ENCODE measurements at regions of chr22 and their contacts with region 1.

Region 1: GRCh38 chr22:46576556-46577367 is 39.3 kb upstream of the CELSR1 start:
- DNase-seq: peak in 1 of 2 donors; percentile 26
- ATAC-seq: peak; percentile 47 to 55
- H3K4me3 ChIP-seq: peak overlapping the region; percentile 76 to 89 (median 80)
- H3K27ac ChIP-seq: peak overlapping the region; percentile 77 to 89 (median 81)
- H3K4me1 ChIP-seq: peaks cover 43 to 48% of the 10 kb centered on the region in 2 donors
- H3K27me3 ChIP-seq: no peaks in the 10 kb centered on the region
- CTCF ChIP-seq: no peak
- POLR2A ChIP-seq: peak in 1 of 2 donors; percentile 51

Region 2: GRCh38 chr22:45948081-45948648 is 628.6 kb before region 1 on chr22:
- in situ Hi-C with region 1: no loop called
- intact Hi-C with region 1: no loop called
- DNase-seq: no peak
- ATAC-seq: no peak
- H3K4me3 ChIP-seq: no peak overlapping the region
- H3K27ac ChIP-seq: no peak overlapping the region
- H3K4me1 ChIP-seq: peaks cover 0 to 14% of the 10 kb centered on the region in 2 donors
- H3K27me3 ChIP-seq: peaks cover 9 to 29% (median 21%) of the 10 kb centered on the region in 3 donors
- CTCF ChIP-seq: no peak
- POLR2A ChIP-seq: no peak

Region 3: DNA sequence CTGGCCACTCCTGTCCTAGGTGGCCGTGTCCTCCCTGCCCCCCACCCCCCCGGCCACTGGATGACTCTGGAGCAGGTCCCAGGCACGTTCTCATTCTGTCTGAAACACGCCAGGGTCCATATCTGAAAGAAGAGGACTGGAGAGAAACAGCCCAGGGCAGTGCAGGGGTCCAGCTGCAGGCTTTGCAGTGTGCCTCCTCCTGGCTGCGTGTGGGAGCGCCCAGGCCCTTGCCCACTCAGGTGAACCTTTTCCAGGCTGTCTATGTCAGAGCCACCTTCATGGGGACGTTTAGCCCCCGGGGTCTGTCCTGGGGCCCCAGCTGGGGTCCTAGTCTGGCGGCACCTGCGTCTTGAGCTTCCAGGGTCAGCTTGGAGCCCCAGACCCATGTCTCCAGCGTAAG is 59.0 kb after region 1 on chr22:
- in situ Hi-C with region 1: no loop called
- intact Hi-C with region 1: loop called (anchors 2 kb)
- DNase-seq: no peak
- ATAC-seq: peak; percentile 37 to 40
- H3K4me3 ChIP-seq: peak overlapping the region in 2 of 4 donors; percentile 27 to 31
- H3K27ac ChIP-seq: peak overlapping the region; percentile 79 to 95 (median 90)
- H3K4me1 ChIP-seq: peaks cover 20 to 51% of the 10 kb centered on the region in 2 donors
- H3K27me3 ChIP-seq: no peaks in the 10 kb centered on the region
- CTCF ChIP-seq: no peak
- POLR2A ChIP-seq: no peak

Region 4: DNA sequence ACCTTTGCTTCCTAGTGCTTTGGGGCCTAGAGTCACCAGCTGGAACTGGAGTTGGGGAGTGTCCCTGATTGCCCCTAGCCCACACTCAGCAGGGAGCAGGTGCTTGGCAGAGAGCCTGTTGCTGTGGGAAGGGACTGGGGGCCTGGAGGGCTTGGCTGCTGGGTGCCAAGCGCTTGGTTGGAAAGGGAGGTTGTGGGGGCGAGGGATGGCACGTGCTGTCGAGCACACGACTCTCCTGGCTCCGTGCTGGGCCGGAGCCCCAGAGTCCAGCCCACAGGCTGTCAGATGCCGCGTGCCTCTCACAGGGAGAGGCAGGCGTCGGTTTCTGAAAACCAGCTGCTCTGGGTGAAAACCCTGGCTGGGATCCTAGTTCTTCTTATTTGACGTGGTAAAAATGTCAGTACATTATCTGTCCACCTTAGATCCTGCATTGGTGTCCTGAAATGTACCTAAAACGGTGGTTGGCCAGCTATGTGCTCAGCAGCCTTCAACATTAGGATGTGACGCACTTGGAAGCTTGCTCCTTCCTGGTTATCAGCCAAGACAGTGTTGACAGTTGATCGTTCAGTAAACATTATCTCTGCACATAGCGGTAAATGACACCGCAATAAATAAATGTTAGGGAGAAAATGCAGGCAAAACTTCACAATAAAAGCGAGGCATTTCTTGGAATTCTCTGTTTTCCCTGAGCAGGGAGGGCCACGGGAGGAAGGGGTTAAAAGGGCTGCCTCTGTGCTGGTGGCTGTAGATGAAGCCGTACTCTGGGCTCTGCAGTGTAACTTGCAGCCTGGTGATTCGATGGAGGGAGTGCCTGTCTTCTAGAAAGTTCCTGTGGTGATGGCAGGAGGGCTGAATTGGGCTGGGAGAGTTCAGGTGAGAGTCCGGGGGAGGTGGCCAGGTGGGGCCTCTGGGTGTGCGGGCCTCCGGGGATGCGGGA is 72.6 kb after region 1 on chr22:
- in situ Hi-C with region 1: no loop called
- intact Hi-C with region 1: loop called (anchors 2 kb)
- DNase-seq: peak; percentile 66 to 67
- ATAC-seq: peak; percentile 67 to 75
- H3K4me3 ChIP-seq: peak overlapping the region in 2 of 4 donors; percentile 6 to 29
- H3K27ac ChIP-seq: peak overlapping the region; percentile 88 to 98 (median 88)
- H3K4me1 ChIP-seq: peaks cover 49 to 67% of the 10 kb centered on the region in 2 donors
- H3K27me3 ChIP-seq: no peaks in the 10 kb centered on the region
- CTCF ChIP-seq: no peak
- POLR2A ChIP-seq: peak in 1 of 2 donors; percentile 22

Region 5: DNA sequence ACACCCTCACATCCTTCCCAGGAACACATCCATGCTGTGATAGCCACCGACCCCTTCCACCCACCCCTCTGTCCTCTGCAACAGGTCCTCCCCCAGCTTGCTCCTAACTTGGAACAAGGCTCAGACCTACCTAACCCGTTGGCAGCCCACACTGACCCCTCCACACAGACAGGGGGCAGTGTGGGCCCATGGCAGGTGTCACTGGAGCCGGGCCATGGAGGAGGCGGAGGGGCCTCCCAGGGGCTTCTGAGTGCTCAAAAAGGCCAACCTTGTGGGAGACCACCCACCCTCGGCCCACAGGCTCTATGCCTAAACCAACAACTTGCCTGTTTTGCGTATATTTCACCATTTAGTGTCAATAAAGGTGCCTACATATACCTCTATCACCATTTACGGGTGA is 104.2 kb after region 1 on chr22:
- in situ Hi-C with region 1: loop called in 1 of 4 experiments (anchors 25 kb)
- intact Hi-C with region 1: loop called (anchors 5 kb)
- DNase-seq: no peak
- ATAC-seq: no peak
- H3K4me3 ChIP-seq: no peak overlapping the region
- H3K27ac ChIP-seq: no peak overlapping the region
- H3K4me1 ChIP-seq: peaks cover 17 to 18% of the 10 kb centered on the region in 2 donors
- H3K27me3 ChIP-seq: no peaks in the 10 kb centered on the region
- CTCF ChIP-seq: peak in 1 of 5 experiments; percentile 14
- POLR2A ChIP-seq: no peak

Region 6: GRCh38 chr22:46737976-46738646 is 161.3 kb after region 1 on chr22 and contains the start of gene CERK:
- in situ Hi-C with region 1: no loop called
- intact Hi-C with region 1: loop called (anchors 5 kb)
- DNase-seq: peak; percentile 69 to 70
- ATAC-seq: peak; percentile 67 to 69
- H3K4me3 ChIP-seq: peak within 1 kb of the TSS; percentile 62 to 79 (median 72)
- H3K27ac ChIP-seq: peak within 1 kb of the TSS; percentile 87 to 94 (median 92)
- H3K4me1 ChIP-seq: peaks cover 63 to 66% of the 10 kb centered on the region in 2 donors
- H3K27me3 ChIP-seq: no peaks in the 10 kb centered on the region
- CTCF ChIP-seq: no peak
- POLR2A ChIP-seq: peak; percentile 69 to 78
- total RNA-seq, gene CERK: 32.7 to 38.7 (median 34.8) TPM